GM10248 (cell line): ENCODE measurements at regions of chr17 and their contacts with region 1.

Region 1: GRCh38 chr17:45640141-45640850 is 143.8 kb upstream of the CRHR1 start:
- DNase-seq: peak; percentile 73
- CTCF ChIP-seq: peak; percentile 99

Region 2: DNA sequence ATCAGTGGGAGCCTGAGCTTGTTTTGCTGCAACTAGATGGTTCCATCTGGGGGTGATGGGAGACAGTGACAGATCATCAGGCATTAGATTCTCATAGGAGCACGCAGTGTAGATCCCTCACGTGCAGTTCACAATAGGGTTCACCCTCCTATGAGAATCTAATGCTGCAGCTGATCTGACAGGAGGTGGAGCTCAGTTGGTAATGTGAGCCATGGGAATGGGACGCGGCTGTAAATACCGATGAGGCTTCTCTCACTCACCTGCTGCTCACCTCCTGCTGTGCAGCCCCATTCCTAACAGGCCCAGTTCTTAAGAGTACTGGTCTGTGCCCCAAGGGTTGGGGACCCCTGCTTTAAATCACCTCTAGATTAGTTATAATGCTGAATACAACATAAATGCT is 12.3 kb before region 1 on chr17:
- CTCF ChIA-PET with region 1: interaction called, 10 read pairs
- POLR2A ChIA-PET with region 1: no interaction called
- DNase-seq: no peak
- CTCF ChIP-seq: no peak

Region 3: DNA sequence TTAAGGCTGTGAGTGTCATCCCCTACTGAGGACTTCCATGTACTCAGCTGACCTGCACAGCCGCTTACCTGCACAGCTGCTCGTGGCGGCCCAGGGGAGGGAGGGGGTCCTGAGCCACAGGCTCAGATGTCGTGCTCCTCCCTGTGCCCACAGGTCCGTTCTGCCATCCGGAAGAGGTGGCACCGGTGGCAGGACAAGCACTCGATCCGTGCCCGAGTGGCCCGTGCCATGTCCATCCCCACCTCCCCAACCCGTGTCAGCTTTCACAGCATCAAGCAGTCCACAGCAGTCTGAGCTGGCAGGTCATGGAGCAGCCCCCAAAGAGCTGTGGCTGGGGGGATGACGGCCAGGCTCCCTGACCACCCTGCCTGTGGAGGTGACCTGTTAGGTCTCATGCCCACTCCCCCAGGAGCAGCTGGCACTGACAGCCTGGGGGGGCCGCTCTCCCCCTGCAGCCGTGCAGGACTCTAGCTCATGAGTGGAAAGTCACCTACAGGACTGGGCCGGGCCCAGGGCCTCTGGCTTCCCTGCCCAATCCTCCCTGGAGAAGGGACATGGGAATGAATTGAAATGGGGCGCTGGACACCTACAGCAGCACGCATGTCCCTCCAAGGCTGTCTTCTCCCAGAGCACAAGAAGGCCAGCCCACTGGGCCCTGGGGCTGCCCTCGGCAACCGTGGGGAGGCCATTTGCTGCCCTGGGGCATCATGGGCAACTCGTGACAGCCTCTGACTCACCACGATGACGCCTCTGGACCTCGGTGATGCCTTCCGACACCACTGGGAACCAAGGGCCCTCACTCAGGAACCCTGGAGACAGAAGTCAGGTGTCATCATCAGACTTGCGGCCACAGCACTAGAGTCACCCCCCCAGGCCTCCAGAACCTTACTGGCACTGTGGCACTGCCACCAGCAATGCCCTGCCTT is 194.4 kb after region 1 on chr17:
- CTCF ChIA-PET with region 1: interaction called, 97 read pairs
- POLR2A ChIA-PET with region 1: no interaction called
- DNase-seq: no peak
- CTCF ChIP-seq: no peak

Region 4: GRCh38 chr17:45852535-45853297 is 212.4 kb after region 1 on chr17:
- CTCF ChIA-PET with region 1: interaction called, 35 read pairs
- POLR2A ChIA-PET with region 1: no interaction called
- DNase-seq: peak; percentile 68
- CTCF ChIP-seq: peak; percentile 90